ENCODE measurements at regions of chr7 and their contacts with region 1.

Region 1: GRCh38 chr7:155598810-155599210 is 45.7 kb upstream of the RBM33 start:
- DNase-seq: peak; percentile 92
- ATAC-seq: peak; percentile 85
- H3K4me3 ChIP-seq: no peak overlapping the region
- H3K27ac ChIP-seq: no peak overlapping the region
- H3K4me1 ChIP-seq: peaks cover 21% of the 10 kb centered on the region
- H3K27me3 ChIP-seq: no peaks in the 10 kb centered on the region
- CTCF ChIP-seq: peak; percentile 99

Region 2: DNA sequence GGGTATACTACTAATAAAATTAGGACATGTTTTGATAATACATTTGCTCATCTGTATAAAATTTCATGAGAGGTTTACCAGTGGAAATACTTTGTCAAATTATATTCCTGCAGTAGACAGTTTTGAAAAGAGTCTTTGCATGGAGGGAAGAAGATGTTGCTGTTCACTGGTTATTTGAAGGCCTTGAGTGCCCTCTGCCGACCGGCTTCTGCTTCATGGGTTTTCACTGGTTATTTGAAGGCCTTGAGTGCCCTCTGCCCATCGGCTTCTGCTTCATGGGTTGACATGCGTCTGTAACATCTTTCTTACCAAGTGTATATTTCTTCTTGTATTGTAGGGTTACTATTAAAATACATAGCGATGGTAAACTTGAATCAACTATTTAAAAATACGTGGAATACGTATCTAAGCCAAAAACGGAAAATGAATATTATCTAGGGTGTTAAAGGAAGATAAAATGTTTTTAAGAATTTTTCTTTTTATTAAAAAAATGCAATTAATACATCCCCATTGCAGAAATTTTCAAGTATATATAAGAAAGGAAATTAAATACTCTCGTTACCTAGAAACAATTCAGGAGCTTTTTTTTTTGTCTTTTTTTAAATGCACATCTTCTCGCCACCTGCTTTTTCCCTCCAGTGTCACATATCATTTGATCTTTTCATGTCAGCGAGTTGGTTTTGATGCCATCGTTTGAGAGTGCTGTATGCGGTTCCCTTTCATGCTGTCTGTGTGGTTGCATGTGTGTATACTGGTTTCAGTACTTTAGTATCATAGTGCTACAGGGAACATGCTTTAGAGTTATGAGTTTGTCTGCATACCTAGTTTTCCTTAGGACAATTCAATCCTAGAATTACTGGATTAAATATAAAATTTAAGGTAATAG is 140.1 kb after region 1 on chr7:
- intact Hi-C with region 1: loop called (anchors 10 kb)
- DNase-seq: peak; percentile 77
- ATAC-seq: peak; percentile 86
- H3K4me3 ChIP-seq: no peak overlapping the region
- H3K27ac ChIP-seq: no peak overlapping the region
- H3K4me1 ChIP-seq: peaks cover 9% of the 10 kb centered on the region
- H3K27me3 ChIP-seq: no peaks in the 10 kb centered on the region
- CTCF ChIP-seq: peak; percentile 65

Region 3: GRCh38 chr7:155769701-155770100 is 170.9 kb after region 1 on chr7:
- intact Hi-C with region 1: loop called (anchors 5 kb)
- DNase-seq: no peak
- ATAC-seq: no peak
- H3K4me3 ChIP-seq: no peak overlapping the region
- H3K27ac ChIP-seq: no peak overlapping the region
- H3K4me1 ChIP-seq: peaks cover 5% of the 10 kb centered on the region
- H3K27me3 ChIP-seq: no peaks in the 10 kb centered on the region
- CTCF ChIP-seq: no peak

Measured in upper lobe of right lung (tissue), 1 donor.